ENCODE measurements at regions of chr2 and their contacts with region 1.

Region 1: GRCh38 chr2:200811336-200812121 is at the start of gene BZW1:
- DNase-seq: peak; percentile 99
- H3K4me3 Mint-ChIP-seq: peak within 1 kb of the TSS; percentile 100
- H3K27ac Mint-ChIP-seq: peak within 1 kb of the TSS; percentile 99
- H3K4me1 Mint-ChIP-seq: peaks cover 43% of the 10 kb centered on the region
- H3K27me3 Mint-ChIP-seq: peaks cover 2% of the 10 kb centered on the region
- total RNA-seq, gene BZW1: 489 and 490 TPM in 2 replicates

Region 2: DNA sequence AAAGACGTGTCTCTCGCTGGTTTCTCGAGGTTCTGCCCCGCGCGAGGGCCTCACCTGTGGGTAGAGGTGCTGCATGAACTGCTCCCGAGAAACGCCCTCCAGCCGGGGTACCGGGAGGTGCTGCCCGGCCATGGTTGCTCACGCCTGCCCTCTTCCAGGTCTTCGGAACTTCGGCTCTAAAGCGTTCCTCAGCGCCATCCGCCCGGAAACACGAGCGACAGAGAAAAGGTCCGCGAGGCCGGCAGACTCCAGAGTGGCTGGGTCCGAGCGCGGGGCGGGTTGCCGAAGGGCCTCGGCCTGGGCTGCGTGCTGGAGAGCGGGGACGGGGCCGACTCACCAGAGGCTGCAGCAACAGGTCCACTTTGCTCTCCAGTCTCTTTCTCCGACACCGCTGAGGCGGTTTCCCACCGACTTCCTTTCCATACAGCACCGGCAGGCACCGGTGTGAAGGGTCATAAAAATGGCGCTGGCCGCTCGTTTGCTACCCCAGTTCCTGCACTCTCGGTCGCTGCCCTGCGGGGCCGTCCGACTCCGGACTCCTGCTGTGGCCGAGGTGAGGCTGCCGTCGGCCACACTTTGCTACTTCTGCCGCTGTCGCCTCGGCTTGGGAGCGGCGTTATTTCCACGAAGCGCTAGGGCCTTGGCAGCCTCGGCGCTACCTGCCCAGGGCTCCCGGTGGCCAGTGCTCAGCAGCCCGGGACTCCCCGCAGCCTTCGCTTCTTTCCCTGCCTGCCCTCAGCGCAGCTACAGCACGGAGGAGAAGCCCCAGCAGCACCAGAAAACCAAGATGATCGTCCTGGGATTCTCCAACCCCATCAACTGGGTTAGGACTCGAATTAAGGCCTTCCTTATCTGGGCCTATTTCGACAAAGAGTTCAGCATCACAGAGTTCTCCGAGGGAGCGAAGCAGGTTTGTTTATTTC is 855.9 kb before region 1 on chr2 and contains the starts of genes MAIP1 and TYW5:
- intact Hi-C with region 1: loop called (anchors 5 kb)
- DNase-seq: peak; percentile 94
- H3K4me3 Mint-ChIP-seq: peak within 1 kb of the TSS; percentile 98
- H3K27ac Mint-ChIP-seq: peak within 1 kb of the TSS; percentile 96
- H3K4me1 Mint-ChIP-seq: peaks cover 41% of the 10 kb centered on the region
- H3K27me3 Mint-ChIP-seq: no peaks in the 10 kb centered on the region
- total RNA-seq, gene MAIP1: 27.9 and 29.6 TPM in 2 replicates
- total RNA-seq, gene TYW5: 10.9 and 11.7 TPM in 2 replicates

Region 3: GRCh38 chr2:200578778-200579177 is 232.8 kb before region 1 on chr2:
- intact Hi-C with region 1: loop called (anchors 5 kb)
- DNase-seq: no peak
- H3K4me3 Mint-ChIP-seq: no peak overlapping the region
- H3K27ac Mint-ChIP-seq: peak overlapping the region; percentile 3
- H3K4me1 Mint-ChIP-seq: peaks cover 16% of the 10 kb centered on the region
- H3K27me3 Mint-ChIP-seq: no peaks in the 10 kb centered on the region

Region 4: DNA sequence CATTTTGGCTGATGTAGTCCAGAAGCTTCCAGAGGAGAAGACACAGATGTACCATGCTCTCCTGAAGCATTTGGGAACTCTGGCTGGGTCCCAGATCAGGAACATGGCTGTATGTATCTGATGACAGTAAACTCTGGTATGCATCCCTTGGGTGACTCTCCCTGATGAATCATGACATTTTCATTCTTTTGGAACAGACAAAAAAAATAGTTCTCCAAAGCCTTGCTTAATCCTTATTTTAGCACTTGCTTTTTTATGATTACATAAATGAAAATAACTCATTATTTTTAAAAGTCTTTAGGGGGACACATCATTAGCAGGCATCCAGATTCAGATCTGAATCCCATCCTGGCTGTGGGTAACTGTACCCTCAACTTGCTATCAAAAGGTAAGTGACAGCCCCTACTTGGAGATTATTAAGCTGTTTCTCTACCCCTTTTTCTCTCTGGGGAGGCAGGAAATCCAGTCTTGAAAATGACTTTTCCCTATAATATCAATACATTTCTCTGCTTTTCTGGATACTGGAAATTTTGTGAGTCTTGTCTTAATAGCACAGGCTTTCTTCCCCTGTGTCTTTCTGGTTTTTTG is 202.4 kb before region 1 on chr2:
- intact Hi-C with region 1: no loop called
- DNase-seq: no peak
- H3K4me3 Mint-ChIP-seq: no peak overlapping the region
- H3K27ac Mint-ChIP-seq: no peak overlapping the region
- H3K4me1 Mint-ChIP-seq: peaks cover 1% of the 10 kb centered on the region
- H3K27me3 Mint-ChIP-seq: peaks cover 21% of the 10 kb centered on the region

Region 5: GRCh38 chr2:200662738-200663137 is 148.8 kb before region 1 on chr2:
- intact Hi-C with region 1: no loop called
- DNase-seq: no peak
- H3K4me3 Mint-ChIP-seq: no peak overlapping the region
- H3K27ac Mint-ChIP-seq: no peak overlapping the region
- H3K4me1 Mint-ChIP-seq: peaks cover 2% of the 10 kb centered on the region
- H3K27me3 Mint-ChIP-seq: peaks cover 24% of the 10 kb centered on the region

Region 6: DNA sequence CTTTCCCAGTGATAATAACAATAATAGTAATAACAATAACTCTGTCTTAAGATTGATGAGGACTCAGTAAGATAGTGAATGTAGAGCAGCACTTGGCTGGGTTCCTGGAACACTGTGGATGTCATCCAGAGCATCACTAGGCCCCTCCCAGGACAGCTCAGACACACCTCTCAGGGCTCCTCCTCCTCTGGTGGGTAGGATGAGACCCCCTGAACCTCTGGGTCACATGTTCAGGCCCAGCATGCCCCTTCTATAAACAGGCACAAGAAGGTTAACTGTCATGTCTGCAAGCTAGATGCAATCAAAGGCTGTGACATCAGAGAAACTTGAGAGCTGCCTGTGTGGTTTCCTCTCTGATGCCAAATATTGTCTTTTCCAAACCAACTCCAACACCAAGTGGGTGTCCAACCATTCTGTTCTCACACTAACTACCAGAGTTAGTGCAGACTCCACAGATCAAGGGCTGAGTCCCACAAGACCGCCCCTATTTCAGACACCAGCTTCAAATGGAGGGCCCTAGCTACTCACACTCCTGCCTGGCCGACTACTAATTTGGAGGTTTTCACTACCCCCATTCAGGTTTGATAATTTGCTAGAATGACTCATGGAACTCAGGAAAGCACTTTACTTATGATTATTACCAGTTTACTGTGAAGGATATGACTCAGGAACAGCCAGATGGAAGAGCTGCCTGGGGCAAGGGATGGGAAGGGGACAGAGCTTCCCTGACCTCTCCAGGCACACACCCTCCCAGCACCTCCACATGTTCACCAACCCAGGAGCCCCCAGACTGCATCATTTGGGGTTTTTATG is 46.2 kb before region 1 on chr2:
- intact Hi-C with region 1: loop called (anchors 1 kb)
- DNase-seq: peak; percentile 68
- H3K4me3 Mint-ChIP-seq: peak overlapping the region; percentile 39
- H3K27ac Mint-ChIP-seq: peak overlapping the region; percentile 90
- H3K4me1 Mint-ChIP-seq: peaks cover 27% of the 10 kb centered on the region
- H3K27me3 Mint-ChIP-seq: no peaks in the 10 kb centered on the region

Region 7: GRCh38 chr2:200888704-200889625 is 77.4 kb after region 1 on chr2 and contains the starts of genes NIF3L1 and PPIL3:
- intact Hi-C with region 1: loop called (anchors 1 kb)
- DNase-seq: peak; percentile 99
- H3K4me3 Mint-ChIP-seq: peak within 1 kb of the TSS; percentile 92
- H3K27ac Mint-ChIP-seq: peak within 1 kb of the TSS; percentile 99
- H3K4me1 Mint-ChIP-seq: peaks cover 46% of the 10 kb centered on the region
- H3K27me3 Mint-ChIP-seq: no peaks in the 10 kb centered on the region
- total RNA-seq, gene NIF3L1: 30.7 and 33.4 TPM in 2 replicates
- total RNA-seq, gene PPIL3: 52.6 and 52.8 TPM in 2 replicates

Region 8: DNA sequence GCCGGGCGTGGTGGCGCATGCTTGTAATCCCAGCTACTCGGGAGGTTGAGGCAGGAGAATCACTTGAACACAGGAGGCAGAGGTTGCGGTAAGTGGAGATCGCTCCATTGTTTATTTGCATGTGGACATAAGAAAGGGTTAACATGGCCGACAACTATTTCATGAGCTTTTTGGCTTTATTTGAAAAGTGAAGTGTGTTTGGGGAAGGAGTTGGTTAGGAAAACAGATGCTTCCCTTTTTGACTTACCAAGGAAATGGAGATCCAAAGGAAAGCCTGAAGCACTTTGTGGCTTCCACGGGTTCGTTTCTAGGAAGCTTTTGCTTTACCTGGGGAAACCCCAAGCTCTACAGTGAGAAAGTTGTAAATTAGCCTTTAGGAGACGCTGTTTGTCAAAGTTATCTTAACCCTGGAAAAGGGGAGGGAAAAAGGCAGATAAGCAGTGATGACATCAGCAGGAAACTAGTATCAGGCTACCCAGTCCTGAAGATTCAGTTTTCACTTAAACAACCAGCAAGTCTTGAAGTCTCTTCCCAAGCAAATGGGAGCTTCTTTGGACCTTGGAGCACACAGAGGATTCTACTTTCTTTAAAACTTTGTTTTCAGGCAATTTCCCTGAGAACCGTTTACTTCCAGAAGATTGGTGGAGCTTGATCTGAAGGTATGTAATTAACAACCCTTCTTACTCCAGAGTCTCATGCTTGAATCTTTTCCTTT is 371.3 kb after region 1 on chr2 and contains the start of gene CASP10:
- intact Hi-C with region 1: loop called (anchors 5 kb)
- DNase-seq: peak; percentile 87
- H3K4me3 Mint-ChIP-seq: peak within 1 kb of the TSS; percentile 98
- H3K27ac Mint-ChIP-seq: peak within 1 kb of the TSS; percentile 95
- H3K4me1 Mint-ChIP-seq: peaks cover 49% of the 10 kb centered on the region
- H3K27me3 Mint-ChIP-seq: no peaks in the 10 kb centered on the region
- total RNA-seq, gene CASP10: 12.7 and 13.1 TPM in 2 replicates

Region 9: DNA sequence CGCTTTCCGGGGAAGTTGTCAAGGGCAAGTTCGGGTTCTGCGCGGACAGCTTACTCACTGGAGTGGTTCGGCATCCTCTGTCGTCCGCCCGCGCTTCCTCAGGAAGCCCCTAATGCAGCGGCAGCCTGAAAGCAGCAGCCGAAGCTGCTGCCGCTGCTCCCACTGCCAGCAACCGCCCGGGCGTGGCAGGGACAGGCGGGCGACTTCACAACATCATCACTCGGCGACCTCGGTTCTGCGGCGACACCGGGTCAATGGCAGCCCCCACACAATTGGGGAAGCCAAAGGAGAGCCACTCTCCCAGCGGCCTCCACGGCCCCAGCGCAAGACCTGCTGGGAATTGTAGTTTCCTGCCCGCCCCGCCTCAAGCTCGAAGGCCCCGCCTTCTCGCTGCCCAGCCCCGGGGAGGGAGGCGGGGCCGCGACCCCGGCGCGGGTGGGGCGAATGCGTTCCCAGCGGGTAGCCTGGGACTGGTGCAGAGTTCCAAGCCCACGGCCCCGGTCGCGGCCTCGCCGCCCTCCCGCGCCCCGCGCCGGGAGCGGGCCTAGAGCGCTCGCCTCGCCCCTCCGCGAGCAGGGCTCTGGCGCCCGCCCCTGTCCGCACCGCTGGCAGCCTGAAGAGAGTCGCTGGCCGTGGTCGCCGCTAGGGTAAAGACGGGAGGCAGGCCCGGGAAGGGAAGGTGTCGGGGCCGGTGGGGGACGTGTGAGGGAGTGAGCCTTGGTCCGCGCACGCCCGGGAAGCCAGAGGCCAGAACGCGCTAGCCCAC is 639.9 kb after region 1 on chr2 and contains the starts of genes STRADB and TRAK2:
- intact Hi-C with region 1: loop called (anchors 2 kb)
- DNase-seq: peak; percentile 99
- H3K4me3 Mint-ChIP-seq: peak within 1 kb of the TSS; percentile 95
- H3K27ac Mint-ChIP-seq: peak within 1 kb of the TSS; percentile 97
- H3K4me1 Mint-ChIP-seq: peaks cover 42% of the 10 kb centered on the region
- H3K27me3 Mint-ChIP-seq: peaks cover 8% of the 10 kb centered on the region
- total RNA-seq, gene STRADB: 18.5 and 20.1 TPM in 2 replicates
- total RNA-seq, gene TRAK2: 26.5 and 29.1 TPM in 2 replicates